ENCODE measurements at regions of chr16 and their contacts with region 1.

Region 1: DNA sequence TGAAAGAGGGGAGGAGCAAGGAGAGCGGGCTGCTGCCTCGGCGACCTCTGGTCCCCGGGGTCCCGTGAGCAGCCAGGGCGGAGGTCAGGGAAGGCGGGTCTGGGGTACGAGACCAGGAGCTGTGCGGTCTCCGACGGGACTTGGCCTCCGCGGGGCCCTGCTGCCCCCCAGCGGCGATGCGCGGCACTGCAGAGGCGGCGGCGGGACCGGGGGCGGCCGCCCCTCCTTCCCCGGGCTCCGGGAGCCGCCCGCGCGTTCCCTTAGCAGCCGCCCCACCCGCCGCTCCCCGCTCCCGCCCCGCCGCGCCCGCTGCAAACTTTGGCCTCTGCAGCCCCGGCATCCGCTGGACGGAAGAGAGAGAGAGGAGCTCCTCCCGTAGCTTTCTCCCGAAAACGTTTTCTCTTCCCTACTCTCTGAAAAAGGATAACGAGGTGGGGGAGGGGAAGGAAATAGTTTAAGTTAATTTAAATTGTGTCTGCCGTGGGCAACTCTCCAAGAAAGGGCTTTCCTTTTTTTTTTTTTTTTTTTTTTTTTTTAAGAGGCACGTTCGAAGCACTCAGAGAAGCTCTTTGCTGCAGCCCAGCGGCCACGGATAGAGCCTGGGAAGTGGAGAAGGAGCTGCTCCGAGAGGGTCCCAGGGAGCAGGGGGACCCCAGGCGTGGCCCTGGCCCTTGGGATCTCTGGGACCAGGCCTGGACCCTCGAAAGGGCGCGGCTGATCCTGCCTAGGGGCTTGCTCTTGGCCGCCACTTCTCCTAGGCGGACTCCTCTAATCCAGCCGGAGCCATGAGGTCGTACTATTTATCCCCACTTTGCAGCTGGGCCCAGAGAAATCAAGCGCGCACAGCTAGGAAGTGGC is 43.2 kb downstream of the C16orf82 start:
- DNase-seq: peak; percentile 67
- ATAC-seq: peak; percentile 78
- H3K4me3 ChIP-seq: peak overlapping the region; percentile 62
- H3K27ac ChIP-seq: no peak overlapping the region
- H3K4me1 ChIP-seq: no peaks in the 10 kb centered on the region
- H3K27me3 ChIP-seq: no peaks in the 10 kb centered on the region
- CTCF ChIP-seq: peak; percentile 54

Region 2: GRCh38 chr16:25823891-25824290 is 1286.0 kb before region 1 on chr16:
- CTCF ChIA-PET with region 1: interaction called, 10 read pairs
- POLR2A ChIA-PET with region 1: no interaction called
- intact Hi-C with region 1: no loop called
- DNase-seq: no peak
- ATAC-seq: no peak
- H3K4me3 ChIP-seq: no peak overlapping the region
- H3K27ac ChIP-seq: no peak overlapping the region
- H3K4me1 ChIP-seq: no peaks in the 10 kb centered on the region
- H3K27me3 ChIP-seq: no peaks in the 10 kb centered on the region
- CTCF ChIP-seq: no peak

Region 3: GRCh38 chr16:26345966-26346365 is 763.9 kb before region 1 on chr16:
- CTCF ChIA-PET with region 1: interaction called, 10 read pairs
- POLR2A ChIA-PET with region 1: no interaction called
- intact Hi-C with region 1: no loop called
- DNase-seq: no peak
- ATAC-seq: no peak
- H3K4me3 ChIP-seq: no peak overlapping the region
- H3K27ac ChIP-seq: no peak overlapping the region
- H3K4me1 ChIP-seq: no peaks in the 10 kb centered on the region
- H3K27me3 ChIP-seq: no peaks in the 10 kb centered on the region
- CTCF ChIP-seq: no peak

Region 4: GRCh38 chr16:26987597-26988010 is 122.3 kb before region 1 on chr16:
- CTCF ChIA-PET with region 1: no interaction called
- POLR2A ChIA-PET with region 1: no interaction called
- intact Hi-C with region 1: no loop called
- DNase-seq: no peak
- ATAC-seq: no peak
- H3K4me3 ChIP-seq: no peak overlapping the region
- H3K27ac ChIP-seq: no peak overlapping the region
- H3K4me1 ChIP-seq: no peaks in the 10 kb centered on the region
- H3K27me3 ChIP-seq: no peaks in the 10 kb centered on the region
- CTCF ChIP-seq: no peak

Region 5: GRCh38 chr16:27052007-27052406 is 57.9 kb before region 1 on chr16:
- CTCF ChIA-PET with region 1: interaction called, 11 read pairs
- POLR2A ChIA-PET with region 1: no interaction called
- intact Hi-C with region 1: no loop called
- DNase-seq: no peak
- ATAC-seq: no peak
- H3K4me3 ChIP-seq: no peak overlapping the region
- H3K27ac ChIP-seq: no peak overlapping the region
- H3K4me1 ChIP-seq: no peaks in the 10 kb centered on the region
- H3K27me3 ChIP-seq: 0 out of 2 replicates have a peak, but pooled peaks cover 8% of the 10 kb centered on the region
- CTCF ChIP-seq: no peak

Region 6: DNA sequence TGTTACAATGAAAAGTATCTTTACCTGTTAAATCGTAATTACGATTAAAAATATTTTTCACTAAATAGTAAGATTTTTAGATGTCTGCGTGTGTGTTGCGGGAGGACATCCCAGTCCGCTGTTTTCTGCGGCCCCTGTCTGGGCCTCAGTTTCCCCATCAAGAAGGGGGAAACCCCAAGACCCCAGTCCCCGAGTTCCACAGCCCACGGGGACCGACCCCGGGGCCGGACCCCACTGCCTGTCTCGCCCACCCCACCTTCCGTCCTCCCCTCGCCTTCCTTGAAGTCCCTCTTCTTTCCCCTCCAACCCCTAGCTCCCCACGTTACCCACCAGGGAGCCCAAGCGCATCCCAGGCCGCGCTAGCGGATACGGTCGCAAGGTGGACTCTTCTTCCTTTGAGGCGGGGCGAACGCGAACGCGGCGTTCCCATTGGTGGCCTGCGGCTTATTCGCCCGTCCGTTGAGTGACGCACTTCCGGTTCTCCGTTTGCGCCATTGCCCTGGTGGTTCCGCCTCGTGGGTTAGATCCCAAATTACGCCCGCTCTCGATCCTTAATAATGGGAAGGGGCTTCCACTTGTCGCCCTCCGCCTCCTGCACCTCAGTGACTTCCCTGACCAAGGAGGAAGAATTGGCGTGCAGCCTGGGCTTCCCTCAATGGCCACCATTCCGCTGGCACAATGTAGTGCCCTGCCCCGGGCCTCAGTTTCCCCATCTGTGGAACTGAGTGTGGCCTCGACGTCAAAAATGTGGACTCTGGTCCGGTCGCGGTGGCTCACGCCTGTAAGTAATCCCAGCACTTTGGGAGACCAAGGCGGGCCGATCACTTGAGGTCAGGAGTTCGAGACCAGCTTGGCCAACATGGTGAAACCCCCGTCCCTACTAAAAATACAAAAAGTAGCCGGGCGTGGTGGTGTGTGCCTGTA is 158.7 kb after region 1 on chr16 and contains the start of gene NSMCE1:
- CTCF ChIA-PET with region 1: interaction called, 16 read pairs
- POLR2A ChIA-PET with region 1: no interaction called
- intact Hi-C with region 1: no loop called
- DNase-seq: peak; percentile 94
- ATAC-seq: peak; percentile 97
- H3K4me3 ChIP-seq: peak within 1 kb of the TSS; percentile 85
- H3K27ac ChIP-seq: peak within 1 kb of the TSS; percentile 41
- H3K4me1 ChIP-seq: peaks cover 28% of the 10 kb centered on the region
- H3K27me3 ChIP-seq: no peaks in the 10 kb centered on the region
- CTCF ChIP-seq: no peak
- total RNA-seq, gene NSMCE1: 25.9 and 32.5 TPM in 2 replicates

Region 7: DNA sequence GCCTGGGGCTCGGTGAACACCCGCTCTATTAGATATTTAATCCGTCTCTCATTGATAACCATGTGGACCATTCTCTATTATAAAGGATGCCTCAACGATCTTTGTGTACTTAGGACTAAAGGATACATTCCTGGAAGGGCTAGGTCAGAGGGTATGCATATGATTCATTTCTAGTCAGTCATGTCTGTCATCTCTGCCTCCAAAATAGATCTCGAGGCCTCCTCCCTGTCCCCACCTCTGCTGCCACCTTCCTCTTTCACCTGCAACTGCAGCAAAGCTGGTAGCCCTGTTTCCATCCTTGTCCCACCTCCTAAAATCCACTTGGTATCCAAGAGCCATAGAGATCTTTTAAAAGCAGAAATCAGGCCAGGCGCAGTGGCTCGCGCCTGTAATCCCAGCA is 561.5 kb after region 1 on chr16:
- CTCF ChIA-PET with region 1: no interaction called
- POLR2A ChIA-PET with region 1: no interaction called
- intact Hi-C with region 1: no loop called
- DNase-seq: peak; percentile 70
- ATAC-seq: peak; percentile 58; the same call in 1 of the 2 replicates
- H3K4me3 ChIP-seq: no peak overlapping the region
- H3K27ac ChIP-seq: no peak overlapping the region
- H3K4me1 ChIP-seq: peaks cover 4% of the 10 kb centered on the region
- H3K27me3 ChIP-seq: no peaks in the 10 kb centered on the region
- CTCF ChIP-seq: peak; percentile 45